ENCODE measurements at regions of chr14 and their contacts with region 1.

Region 1: GRCh38 chr14:79278798-79279644 is 932.3 kb downstream of the DIO2 start:
- DNase-seq: no peak
- H3K4me3 ChIP-seq: peak overlapping the region; percentile 65 to 87 (median 71)
- H3K27ac ChIP-seq: peak overlapping the region; percentile 71 to 80 (median 76)
- H3K4me1 ChIP-seq: peaks cover 10 to 44% (median 30%) of the 10 kb centered on the region in 4 donors
- H3K27me3 ChIP-seq: no peaks in the 10 kb centered on the region
- CTCF ChIP-seq: no peak
- EP300 ChIP-seq: no peak
- POLR2A ChIP-seq: no peak

Region 2: GRCh38 chr14:78959674-78960264 is 319.3 kb before region 1 on chr14:
- intact Hi-C with region 1: loop called (anchors 10 kb)
- DNase-seq: no peak
- H3K4me3 ChIP-seq: peak overlapping the region; percentile 8 to 49 (median 32)
- H3K27ac ChIP-seq: peak overlapping the region in 1 of 4 donors; percentile 41
- H3K4me1 ChIP-seq: peaks cover 0 to 8% (median 8%) of the 10 kb centered on the region in 4 donors
- H3K27me3 ChIP-seq: no peaks in the 10 kb centered on the region
- CTCF ChIP-seq: peak; percentile 79 to 89 (median 81)
- EP300 ChIP-seq: no peak
- POLR2A ChIP-seq: no peak

Region 3: DNA sequence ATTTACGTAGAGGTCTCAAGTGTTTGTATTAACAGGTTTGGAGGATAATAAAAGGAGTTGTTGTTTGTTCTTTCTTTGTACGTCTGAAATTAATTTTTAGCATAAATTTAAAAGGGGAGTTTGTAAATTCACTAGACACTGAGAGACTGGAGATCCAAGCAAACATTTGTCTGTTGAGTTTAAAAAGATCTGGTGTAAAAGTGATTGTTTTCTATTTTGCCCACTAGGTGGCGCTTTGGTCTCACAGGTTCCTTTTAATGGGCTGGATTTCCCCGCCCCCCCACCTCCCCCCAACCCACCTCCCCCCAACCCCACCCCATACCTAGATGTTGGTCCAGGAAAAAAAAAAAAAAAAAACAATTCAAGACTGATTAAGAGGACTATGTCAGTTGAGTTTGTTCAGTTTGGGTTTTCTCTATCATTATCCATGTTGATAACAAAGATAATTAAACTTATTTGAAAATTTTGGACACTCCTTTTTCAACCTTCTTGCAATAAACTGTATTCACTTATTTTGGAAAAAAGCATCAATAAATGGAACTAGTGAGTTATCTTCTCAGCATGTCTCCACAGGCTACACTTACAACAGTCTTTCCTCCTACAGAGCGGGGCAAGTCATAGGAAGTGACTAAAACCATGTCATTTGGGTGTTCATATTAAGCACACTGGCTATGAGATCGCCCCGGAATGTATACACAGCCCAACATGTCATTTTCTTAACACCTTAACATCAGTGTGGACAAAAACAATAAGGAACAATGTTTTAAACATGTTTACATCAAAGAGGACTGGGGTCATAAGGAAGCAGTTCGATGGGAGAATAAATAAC is 267.7 kb before region 1 on chr14:
- intact Hi-C with region 1: loop called (anchors 5 kb)
- DNase-seq: no peak
- H3K4me3 ChIP-seq: no peak overlapping the region
- H3K27ac ChIP-seq: no peak overlapping the region
- H3K4me1 ChIP-seq: peaks cover 0 to 17% (median 11%) of the 10 kb centered on the region in 4 donors
- H3K27me3 ChIP-seq: no peaks in the 10 kb centered on the region
- CTCF ChIP-seq: peak in 2 of 3 experiments; percentile 57 to 59
- EP300 ChIP-seq: no peak
- POLR2A ChIP-seq: no peak

Region 4: DNA sequence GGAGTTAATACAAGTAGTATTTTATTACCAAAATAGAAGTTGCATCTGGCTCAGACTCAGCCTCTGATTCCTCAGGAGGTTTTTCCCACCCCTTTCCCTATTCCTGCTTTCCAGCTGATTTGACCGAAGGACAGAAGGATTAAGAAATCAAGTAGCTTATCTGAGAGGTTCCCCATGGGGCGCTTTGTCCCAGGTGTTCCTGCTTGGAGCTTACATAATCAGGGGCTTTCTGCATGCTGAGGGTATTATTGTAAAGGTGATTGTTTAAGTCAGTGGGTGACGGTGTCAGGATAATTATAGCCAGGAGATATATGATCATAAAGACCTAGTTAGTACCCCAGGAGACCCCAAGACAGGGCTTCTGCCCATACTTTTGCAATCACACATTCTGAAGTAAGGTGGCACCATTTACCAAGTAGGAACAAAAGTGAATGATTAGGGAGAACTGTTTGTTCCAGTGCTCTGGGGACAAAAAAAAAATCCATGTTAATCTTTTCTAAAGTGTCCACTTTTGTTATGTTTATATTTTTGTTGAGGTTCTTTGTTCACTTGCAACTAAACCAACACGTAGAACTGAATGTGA is 187.5 kb before region 1 on chr14:
- intact Hi-C with region 1: loop called (anchors 5 kb)
- DNase-seq: no peak
- H3K4me3 ChIP-seq: no peak overlapping the region
- H3K27ac ChIP-seq: peak overlapping the region; percentile 71 to 81 (median 78)
- H3K4me1 ChIP-seq: peaks cover 0 to 60% (median 46%) of the 10 kb centered on the region in 4 donors
- H3K27me3 ChIP-seq: no peaks in the 10 kb centered on the region
- CTCF ChIP-seq: peak; percentile 34 to 42 (median 38)
- EP300 ChIP-seq: no peak
- POLR2A ChIP-seq: no peak

Region 5: DNA sequence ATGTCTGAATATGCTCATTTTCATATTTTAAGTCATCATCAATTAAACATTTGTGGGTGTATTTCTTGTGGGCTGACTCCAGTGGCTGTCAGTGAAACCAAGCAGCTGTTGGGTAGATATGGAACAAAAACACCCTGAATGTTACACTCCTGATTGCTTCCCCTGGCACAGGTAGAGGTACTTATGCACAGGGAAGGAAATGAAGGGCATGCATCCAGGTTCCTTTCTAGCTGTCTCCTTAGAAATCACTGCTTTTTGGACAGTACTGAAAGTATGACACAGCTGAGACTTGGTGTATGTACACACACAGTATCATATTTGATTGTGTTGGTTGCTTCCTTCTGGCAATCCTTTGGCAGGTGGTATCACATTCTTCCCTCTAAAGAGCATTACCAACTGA is 74.4 kb before region 1 on chr14:
- intact Hi-C with region 1: no loop called
- DNase-seq: no peak
- H3K4me3 ChIP-seq: no peak overlapping the region
- H3K27ac ChIP-seq: no peak overlapping the region
- H3K4me1 ChIP-seq: peaks cover 0 to 12% (median 3%) of the 10 kb centered on the region in 4 donors
- H3K27me3 ChIP-seq: no peaks in the 10 kb centered on the region
- CTCF ChIP-seq: no peak
- EP300 ChIP-seq: no peak
- POLR2A ChIP-seq: no peak

Region 6: GRCh38 chr14:79369359-79370332 is 90.6 kb after region 1 on chr14:
- intact Hi-C with region 1: loop called (anchors 10 kb)
- DNase-seq: no peak
- H3K4me3 ChIP-seq: no peak overlapping the region
- H3K27ac ChIP-seq: peak overlapping the region; percentile 57 to 76 (median 66)
- H3K4me1 ChIP-seq: peaks cover 0 to 54% (median 29%) of the 10 kb centered on the region in 4 donors
- H3K27me3 ChIP-seq: no peaks in the 10 kb centered on the region
- CTCF ChIP-seq: peak in 2 of 3 experiments; percentile 16 to 18
- EP300 ChIP-seq: no peak
- POLR2A ChIP-seq: no peak

Region 7: GRCh38 chr14:79442786-79443185 is 163.8 kb after region 1 on chr14:
- intact Hi-C with region 1: loop called (anchors 10 kb)
- DNase-seq: no peak
- H3K4me3 ChIP-seq: no peak overlapping the region
- H3K27ac ChIP-seq: peak overlapping the region; percentile 61 to 69 (median 65)
- H3K4me1 ChIP-seq: peaks cover 0 to 53% (median 38%) of the 10 kb centered on the region in 4 donors
- H3K27me3 ChIP-seq: no peaks in the 10 kb centered on the region
- CTCF ChIP-seq: no peak
- EP300 ChIP-seq: no peak
- POLR2A ChIP-seq: no peak